HepG2 (cell line): ENCODE measurements at regions of chr4 and their contacts with region 1.

Region 1: GRCh38 chr4:123770884-123771283 is 374.3 kb downstream of the SPRY1 start:
- DNase-seq: no peak
- ATAC-seq: no peak
- H3K4me3 ChIP-seq: no peak overlapping the region
- H3K27ac ChIP-seq: no peak overlapping the region
- H3K4me1 ChIP-seq: no peaks in the 10 kb centered on the region
- H3K27me3 ChIP-seq: no peaks in the 10 kb centered on the region
- CTCF ChIP-seq: no peak
- EP300 ChIP-seq: no peak
- POLR2A ChIP-seq: no peak
- RAD21 ChIP-seq: no peak

Region 2: DNA sequence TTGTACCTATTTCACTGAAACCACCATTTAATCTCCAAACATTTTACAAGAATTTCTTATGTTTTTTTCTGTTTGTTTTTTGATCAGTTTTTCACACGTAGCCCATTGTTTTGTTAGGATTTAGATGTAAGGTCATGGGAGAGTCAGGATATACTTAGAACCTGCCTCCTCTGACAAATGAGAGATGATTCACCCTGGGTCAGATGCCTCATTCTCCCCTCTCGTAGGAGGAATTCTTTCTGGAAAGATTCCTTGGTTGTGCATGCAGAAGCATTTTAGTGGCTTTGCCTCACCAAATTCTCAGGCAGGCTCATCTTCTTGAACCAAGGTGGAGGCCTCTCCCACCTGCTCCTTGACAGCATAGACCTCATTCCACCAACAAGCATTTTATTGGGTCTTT is 225.1 kb after region 1 on chr4:
- CTCF ChIA-PET with region 1: interaction called, 3 read pairs
- POLR2A ChIA-PET with region 1: no interaction called
- in situ Hi-C with region 1: loop called (anchors 5 kb)
- intact Hi-C with region 1: no loop called
- DNase-seq: no peak
- ATAC-seq: no peak
- H3K4me3 ChIP-seq: no peak overlapping the region
- H3K27ac ChIP-seq: no peak overlapping the region
- H3K4me1 ChIP-seq: no peaks in the 10 kb centered on the region
- H3K27me3 ChIP-seq: no peaks in the 10 kb centered on the region
- CTCF ChIP-seq: no peak
- EP300 ChIP-seq: no peak
- POLR2A ChIP-seq: no peak
- RAD21 ChIP-seq: no peak